ENCODE measurements at regions of chr12 and their contacts with region 1.

Region 1: DNA sequence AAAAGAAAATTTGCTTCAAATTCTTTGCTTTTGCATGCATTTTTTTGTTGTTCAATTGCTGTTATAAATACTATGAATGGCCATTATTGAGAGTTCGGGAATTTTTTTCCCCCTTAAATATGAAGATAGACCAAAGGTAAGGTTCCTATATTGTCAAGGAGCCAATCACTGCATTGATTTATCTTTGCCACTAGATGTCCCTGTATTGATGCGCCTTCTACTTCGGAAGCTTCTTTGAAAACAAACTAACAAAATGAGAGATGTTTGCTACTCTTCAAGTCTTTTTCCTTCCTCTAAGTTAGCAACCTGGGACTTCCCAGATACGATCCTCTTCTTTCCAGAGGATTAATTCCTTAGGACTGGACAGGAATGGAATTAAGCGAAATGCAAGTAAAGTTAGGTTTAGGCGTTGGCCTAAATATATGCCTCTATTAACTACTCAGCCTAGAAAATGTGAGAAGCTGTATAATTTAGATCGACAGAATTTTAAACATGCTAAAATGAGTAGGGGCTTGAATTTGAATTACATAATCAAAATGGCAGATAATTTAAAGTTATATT is 318.1 kb downstream of the AEBP2 start:
- DNase-seq: no peak
- H3K4me3 Mint-ChIP-seq: no peak overlapping the region
- H3K27ac Mint-ChIP-seq: no peak overlapping the region
- H3K4me1 Mint-ChIP-seq: no peaks in the 10 kb centered on the region
- H3K27me3 Mint-ChIP-seq: peaks cover 1% of the 10 kb centered on the region

Region 2: DNA sequence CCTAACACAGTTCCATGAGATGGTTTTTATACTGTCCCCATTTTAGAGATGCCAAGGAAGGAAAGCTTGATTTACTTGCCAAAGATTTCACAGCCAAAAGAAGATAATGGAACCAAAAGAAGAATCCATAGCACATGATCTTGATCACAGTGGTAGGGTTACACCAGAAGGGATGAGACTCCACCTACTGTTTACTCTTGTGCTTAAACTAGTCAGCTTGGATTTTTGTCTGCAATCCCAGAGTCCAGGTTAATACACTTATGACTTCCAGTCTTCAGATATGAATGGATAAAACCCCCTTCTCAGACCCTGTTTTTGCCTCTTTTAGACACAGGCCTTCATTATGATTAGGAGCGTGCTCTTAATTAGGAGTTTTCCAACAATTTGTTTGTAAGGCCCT is 136.1 kb after region 1 on chr12:
- CTCF ChIA-PET with region 1: interaction called, 14 read pairs
- POLR2A ChIA-PET with region 1: no interaction called
- DNase-seq: no peak
- H3K4me3 Mint-ChIP-seq: no peak overlapping the region
- H3K27ac Mint-ChIP-seq: no peak overlapping the region
- H3K4me1 Mint-ChIP-seq: peaks cover 12% of the 10 kb centered on the region
- H3K27me3 Mint-ChIP-seq: no peaks in the 10 kb centered on the region

Region 3: GRCh38 chr12:19970116-19970515 is 212.7 kb after region 1 on chr12:
- CTCF ChIA-PET with region 1: no interaction called
- POLR2A ChIA-PET with region 1: no interaction called
- DNase-seq: no peak
- H3K4me3 Mint-ChIP-seq: no peak overlapping the region
- H3K27ac Mint-ChIP-seq: no peak overlapping the region
- H3K4me1 Mint-ChIP-seq: no peaks in the 10 kb centered on the region
- H3K27me3 Mint-ChIP-seq: no peaks in the 10 kb centered on the region